Activated CD8-positive, alpha-beta T cell treated with anti-CD3 and anti-CD28 coated beads for 36 hours (primary cell): ENCODE measurements at regions of chr5 and their contacts with region 1.

Region 1: GRCh38 chr5:96934708-96935558 is 947 bp upstream of the LNPEP start:
- DNase-seq: peak; percentile 95
- ATAC-seq: peak; percentile 73
- H3K4me3 Mint-ChIP-seq: peak overlapping the region; percentile 82
- H3K27ac Mint-ChIP-seq: peak overlapping the region; percentile 99
- H3K4me1 Mint-ChIP-seq: peaks cover 51% of the 10 kb centered on the region
- H3K27me3 Mint-ChIP-seq: no peaks in the 10 kb centered on the region
- CTCF ChIP-seq: no peak

Region 2: DNA sequence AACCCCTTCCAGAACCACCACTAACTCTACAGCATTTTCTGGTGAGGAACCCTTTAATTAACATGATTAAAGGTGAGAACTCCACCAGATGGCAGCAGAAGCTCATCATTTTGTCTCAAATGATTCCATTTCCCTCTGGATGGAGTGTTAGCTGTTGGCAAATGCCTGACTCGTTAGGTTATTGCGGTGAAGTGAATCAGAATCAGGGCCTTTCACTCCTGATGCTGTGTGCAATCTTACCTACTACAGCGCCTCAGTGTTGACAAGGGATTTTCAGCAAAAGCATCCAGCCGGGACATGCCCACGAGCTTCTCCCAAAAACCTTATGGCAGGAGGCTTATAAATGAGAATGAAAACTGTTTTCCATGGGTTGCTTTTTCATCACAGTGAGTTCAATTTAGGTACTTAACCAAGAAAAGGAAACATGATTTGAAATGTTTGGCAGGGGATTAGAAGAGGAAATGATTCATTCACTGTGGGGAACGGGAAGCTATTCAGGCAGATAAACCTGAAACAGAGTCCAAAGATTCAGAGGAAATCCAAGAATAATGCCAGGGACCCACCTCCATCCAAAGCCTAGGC is 320.7 kb before region 1 on chr5:
- CTCF ChIA-PET with region 1: no interaction called
- POLR2A ChIA-PET with region 1: no interaction called
- intact Hi-C with region 1: no loop called
- DNase-seq: peak; percentile 59
- ATAC-seq: peak; percentile 51
- H3K4me3 Mint-ChIP-seq: no peak overlapping the region
- H3K27ac Mint-ChIP-seq: no peak overlapping the region
- H3K4me1 Mint-ChIP-seq: peaks cover 4% of the 10 kb centered on the region
- H3K27me3 Mint-ChIP-seq: peaks cover 11% of the 10 kb centered on the region
- CTCF ChIP-seq: peak; percentile 80

Region 3: DNA sequence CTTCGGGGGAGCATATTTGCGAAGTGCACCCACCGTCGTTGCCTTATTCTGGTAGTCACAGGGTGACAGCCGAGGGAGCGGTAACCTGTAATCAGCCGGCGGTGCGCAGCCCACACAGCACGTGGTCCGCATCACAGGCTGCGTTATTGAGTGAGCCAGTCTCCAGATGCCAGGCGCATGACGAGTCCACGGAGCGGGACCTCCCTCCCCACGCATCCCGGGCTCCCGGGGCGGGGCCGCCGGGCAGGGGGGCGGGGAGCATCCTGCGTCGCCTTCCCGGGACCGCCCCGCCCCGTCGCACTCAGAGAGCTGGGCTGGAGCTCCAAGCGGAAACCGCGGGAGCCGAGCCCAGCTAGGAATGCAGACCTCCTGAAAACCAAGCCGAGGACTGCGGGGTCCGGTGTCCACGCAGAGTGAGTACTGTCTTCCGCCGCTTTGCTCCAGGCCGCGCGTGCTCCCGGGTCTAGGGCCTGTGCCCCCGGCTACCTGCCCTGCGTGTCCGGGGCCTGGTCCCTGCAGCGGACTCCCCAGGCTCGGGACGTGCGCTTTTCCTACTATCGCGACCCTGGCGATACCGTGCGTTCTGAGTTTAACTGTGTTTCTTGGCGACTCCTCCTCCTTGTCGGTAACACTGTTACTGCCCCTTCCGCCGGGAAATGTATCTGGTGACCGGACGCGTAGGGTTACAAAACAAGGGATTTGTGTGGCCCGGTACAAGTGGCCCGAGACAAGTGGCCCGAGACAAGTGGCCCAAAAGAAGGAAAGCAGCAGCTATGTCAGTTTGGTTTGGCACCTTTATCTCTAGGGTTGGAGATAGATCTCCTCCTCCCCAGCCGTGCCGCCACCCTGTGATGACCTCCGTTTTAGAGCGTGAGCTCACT is 232.2 kb before region 1 on chr5:
- CTCF ChIA-PET with region 1: no interaction called
- POLR2A ChIA-PET with region 1: no interaction called
- intact Hi-C with region 1: no loop called
- DNase-seq: peak; percentile 91
- ATAC-seq: peak; percentile 86
- H3K4me3 Mint-ChIP-seq: peak overlapping the region; percentile 92
- H3K27ac Mint-ChIP-seq: peak overlapping the region; percentile 96
- H3K4me1 Mint-ChIP-seq: peaks cover 50% of the 10 kb centered on the region
- H3K27me3 Mint-ChIP-seq: no peaks in the 10 kb centered on the region
- CTCF ChIP-seq: no peak

Region 4: DNA sequence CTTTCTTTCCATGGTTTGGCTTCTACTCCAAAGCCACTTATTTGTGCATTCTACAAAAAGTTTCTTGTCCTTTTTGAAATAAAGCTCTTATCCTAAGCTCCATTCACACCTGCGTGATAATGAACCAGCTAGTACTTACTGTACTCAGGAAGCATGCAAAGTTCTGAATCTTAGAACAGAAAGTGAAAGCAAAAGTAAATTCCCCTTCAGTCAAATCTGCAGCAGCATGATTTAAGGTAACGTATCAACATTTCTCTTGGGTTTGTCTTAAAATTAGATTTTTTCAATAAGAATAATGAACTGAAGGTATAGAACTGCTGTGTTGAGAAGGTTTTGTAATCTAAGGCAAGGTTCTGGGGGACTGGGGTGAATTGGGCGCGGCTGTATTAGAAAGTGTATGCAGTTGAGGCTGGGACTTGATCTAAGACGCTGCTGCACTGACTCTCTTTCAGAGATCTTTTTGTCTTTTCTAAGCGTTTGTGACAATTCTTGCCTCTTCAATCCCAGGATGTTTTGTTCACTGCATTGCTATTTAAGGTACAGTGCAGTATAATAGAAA is 58.6 kb before region 1 on chr5 and contains the start of gene ERAP2:
- CTCF ChIA-PET with region 1: interaction called, 7 read pairs
- POLR2A ChIA-PET with region 1: interaction called, 9 read pairs
- intact Hi-C with region 1: loop called (anchors 2 kb)
- DNase-seq: peak; percentile 28
- ATAC-seq: peak; percentile 70
- H3K4me3 Mint-ChIP-seq: peak within 1 kb of the TSS; percentile 89
- H3K27ac Mint-ChIP-seq: peak within 1 kb of the TSS; percentile 97
- H3K4me1 Mint-ChIP-seq: peaks cover 60% of the 10 kb centered on the region
- H3K27me3 Mint-ChIP-seq: no peaks in the 10 kb centered on the region
- CTCF ChIP-seq: no peak
- total RNA-seq, gene ERAP2: 43.0 to 44.5 TPM

Region 5: DNA sequence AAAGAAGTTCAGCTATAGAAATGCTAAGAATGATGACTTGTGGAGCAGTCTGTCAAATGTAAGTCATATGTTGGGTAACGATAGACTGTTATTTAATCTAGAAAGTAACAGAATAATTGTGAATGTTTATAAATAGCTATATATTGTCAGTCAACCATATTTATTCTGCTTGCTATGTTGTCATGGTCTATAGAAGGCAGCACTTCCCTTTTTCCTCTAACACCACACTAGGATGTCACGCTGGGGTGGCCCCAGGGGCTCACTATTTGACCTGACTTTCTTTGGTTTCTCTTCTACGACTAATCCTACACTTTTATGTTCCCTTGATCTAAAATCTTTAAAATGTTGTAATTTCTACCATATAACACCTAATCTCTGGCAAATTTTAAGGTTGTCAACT is 38.1 kb before region 1 on chr5:
- CTCF ChIA-PET with region 1: interaction called, 4 read pairs
- POLR2A ChIA-PET with region 1: no interaction called
- intact Hi-C with region 1: loop called (anchors 5 kb)
- DNase-seq: peak; percentile 53
- ATAC-seq: peak; percentile 63
- H3K4me3 Mint-ChIP-seq: peak overlapping the region; percentile 75
- H3K27ac Mint-ChIP-seq: peak overlapping the region; percentile 95
- H3K4me1 Mint-ChIP-seq: peaks cover 60% of the 10 kb centered on the region
- H3K27me3 Mint-ChIP-seq: no peaks in the 10 kb centered on the region
- CTCF ChIP-seq: no peak

Region 6: DNA sequence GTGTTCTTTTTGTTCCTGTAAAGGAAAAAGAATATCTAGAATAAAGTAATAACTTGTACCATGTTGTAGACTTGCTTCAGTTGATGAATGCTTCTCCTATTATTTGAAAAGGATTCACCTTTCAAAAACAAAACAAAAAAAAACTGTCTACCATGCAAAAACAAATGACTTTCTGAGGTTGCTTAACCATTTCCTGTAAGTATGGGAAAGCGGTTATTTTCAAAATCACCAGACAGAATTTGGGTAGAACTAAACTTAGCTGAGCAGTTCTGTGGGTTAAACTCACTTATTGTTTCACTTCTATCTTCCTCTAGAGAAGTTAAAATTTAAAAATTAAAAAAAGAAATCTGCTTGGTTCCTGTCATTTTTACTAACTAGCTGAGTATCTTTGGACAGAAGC is 26.1 kb after region 1 on chr5:
- CTCF ChIA-PET with region 1: interaction called, 4 read pairs
- POLR2A ChIA-PET with region 1: interaction called, 18 read pairs
- intact Hi-C with region 1: loop called (anchors 1 kb)
- DNase-seq: no peak
- ATAC-seq: peak; percentile 24
- H3K4me3 Mint-ChIP-seq: peak overlapping the region; percentile 27
- H3K27ac Mint-ChIP-seq: peak overlapping the region; percentile 95
- H3K4me1 Mint-ChIP-seq: peaks cover 81% of the 10 kb centered on the region
- H3K27me3 Mint-ChIP-seq: no peaks in the 10 kb centered on the region
- CTCF ChIP-seq: no peak

Region 7: GRCh38 chr5:97009212-97009898 is 74.4 kb after region 1 on chr5:
- CTCF ChIA-PET with region 1: no interaction called
- POLR2A ChIA-PET with region 1: no interaction called
- intact Hi-C with region 1: loop called (anchors 10 kb)
- DNase-seq: no peak
- ATAC-seq: peak; percentile 71
- H3K4me3 Mint-ChIP-seq: no peak overlapping the region
- H3K27ac Mint-ChIP-seq: peak overlapping the region; percentile 77
- H3K4me1 Mint-ChIP-seq: peaks cover 30% of the 10 kb centered on the region
- H3K27me3 Mint-ChIP-seq: no peaks in the 10 kb centered on the region
- CTCF ChIP-seq: no peak